ENCODE measurements at regions of chr15 and their contacts with region 1.

Region 1: DNA sequence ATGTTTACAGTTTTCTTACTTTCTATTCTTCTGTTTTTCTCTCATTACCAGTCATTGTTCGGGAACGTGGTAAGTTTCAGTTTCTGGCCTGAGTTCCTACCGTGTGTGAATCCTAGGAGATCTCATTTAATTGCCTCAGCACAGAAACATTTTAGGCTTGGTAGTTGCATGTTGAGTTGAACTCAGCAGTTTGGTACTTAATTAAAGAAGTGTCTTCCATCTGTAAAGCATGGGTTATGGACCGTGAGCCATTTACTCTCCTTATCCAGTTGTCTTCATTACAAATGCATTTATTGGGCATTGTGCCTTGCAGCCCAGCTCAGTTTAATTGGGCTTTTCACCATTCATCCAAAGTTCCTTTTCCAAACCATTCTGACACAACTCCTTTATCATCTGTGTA is 142.1 kb upstream of the CHRM5 start:
- DNase-seq: no peak
- ATAC-seq: no peak
- H3K4me3 ChIP-seq: no peak overlapping the region
- H3K27ac ChIP-seq: no peak overlapping the region
- H3K4me1 ChIP-seq: no peaks in the 10 kb centered on the region
- H3K27me3 ChIP-seq: no peaks in the 10 kb centered on the region; a peak in 1 of 4 replicates
- CTCF ChIP-seq: no peak
- EP300 ChIP-seq: no peak
- POLR2A ChIP-seq: no peak
- RAD21 ChIP-seq: no peak

Region 2: GRCh38 chr15:33778852-33779251 is 47.3 kb before region 1 on chr15:
- CTCF ChIA-PET with region 1: no interaction called
- POLR2A ChIA-PET with region 1: no interaction called
- RAD21 ChIA-PET with region 1: no interaction called
- SMC1A ChIA-PET with region 1: no interaction called
- in situ Hi-C with region 1: no loop called
- intact Hi-C with region 1: loop called (anchors 5 kb)
- DNase-seq: no peak
- ATAC-seq: no peak
- H3K4me3 ChIP-seq: no peak overlapping the region
- H3K27ac ChIP-seq: no peak overlapping the region
- H3K4me1 ChIP-seq: 0 out of 2 replicates have a peak, but pooled peaks cover 4% of the 10 kb centered on the region
- H3K27me3 ChIP-seq: no peaks in the 10 kb centered on the region
- CTCF ChIP-seq: no peak
- EP300 ChIP-seq: no peak
- POLR2A ChIP-seq: no peak
- RAD21 ChIP-seq: no peak